Ovary (tissue), 10 donors: ENCODE measurements at regions of chr11 and their contacts with region 1.

Region 1: GRCh38 chr11:74726547-74727182 is 4.6 kb downstream of the CHRDL2 start:
- DNase-seq: peak; percentile 71 to 84 (median 78)
- H3K4me3 ChIP-seq: no peak overlapping the region
- H3K27ac ChIP-seq: no peak overlapping the region
- H3K4me1 ChIP-seq: no peaks in the 10 kb centered on the region
- H3K27me3 ChIP-seq: no peaks in the 10 kb centered on the region
- CTCF ChIP-seq: peak; percentile 84 to 94 (median 91)
- EP300 ChIP-seq: no peak
- POLR2A ChIP-seq: peak; percentile 24

Region 2: DNA sequence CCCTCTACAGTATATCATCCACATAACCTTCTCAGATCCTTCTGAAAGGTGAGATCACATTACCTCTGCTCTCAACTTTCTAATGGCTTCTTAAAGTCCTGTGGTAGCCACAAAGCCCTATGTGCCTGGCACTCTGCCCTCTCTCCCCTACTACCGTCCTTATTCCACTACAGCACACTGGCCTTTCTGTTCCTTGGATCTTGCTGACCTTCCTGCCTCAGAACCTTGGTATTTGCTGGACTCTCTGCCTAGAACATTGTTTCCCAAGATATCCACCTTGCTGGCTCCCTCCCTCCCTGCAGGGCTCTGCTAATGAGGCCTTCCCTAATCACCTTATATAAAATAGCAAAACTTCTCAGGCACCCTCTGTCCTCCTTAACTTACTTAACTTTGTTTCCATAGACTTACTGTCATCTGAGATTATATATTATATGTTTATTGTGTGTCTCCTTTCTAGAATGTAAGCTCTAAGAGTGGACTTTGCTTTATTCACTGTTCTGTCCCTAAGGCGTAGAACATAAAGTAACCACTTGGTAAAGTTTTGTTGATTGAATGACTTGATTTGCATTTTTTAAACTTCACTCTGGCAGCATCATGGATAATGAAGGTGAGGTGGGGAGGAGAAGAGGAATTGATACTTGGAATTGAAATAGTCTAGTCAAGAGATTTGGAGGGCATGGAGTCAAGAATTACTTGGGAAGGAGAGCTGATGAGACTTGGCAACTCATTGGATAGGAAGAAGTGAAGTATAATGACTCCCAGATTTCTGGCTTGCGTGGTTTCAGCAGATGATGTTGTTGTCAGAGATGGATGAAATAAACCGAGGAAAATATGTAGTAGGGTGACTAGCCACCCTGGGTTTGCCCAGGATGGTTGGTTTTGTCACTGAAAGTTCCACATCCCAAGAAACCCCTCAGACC is 123.8 kb before region 1 on chr11:
- intact Hi-C with region 1: loop called in 2 of 4 experiments (anchors 5 to 10 kb)
- DNase-seq: no peak
- H3K4me3 ChIP-seq: no peak overlapping the region
- H3K27ac ChIP-seq: no peak overlapping the region
- H3K4me1 ChIP-seq: no peaks in the 10 kb centered on the region
- H3K27me3 ChIP-seq: no peaks in the 10 kb centered on the region
- CTCF ChIP-seq: no peak
- EP300 ChIP-seq: no peak
- POLR2A ChIP-seq: no peak

Region 3: GRCh38 chr11:74634537-74634936 is 92.1 kb before region 1 on chr11:
- intact Hi-C with region 1: loop called in 3 of 4 experiments (anchors 5 to 10 kb)
- DNase-seq: no peak
- H3K4me3 ChIP-seq: no peak overlapping the region
- H3K27ac ChIP-seq: no peak overlapping the region
- H3K4me1 ChIP-seq: no peaks in the 10 kb centered on the region
- H3K27me3 ChIP-seq: no peaks in the 10 kb centered on the region
- CTCF ChIP-seq: no peak
- EP300 ChIP-seq: no peak
- POLR2A ChIP-seq: no peak